OCI-LY7 (cell line): ENCODE measurements at regions of chr10 and their contacts with region 1.

Region 1: DNA sequence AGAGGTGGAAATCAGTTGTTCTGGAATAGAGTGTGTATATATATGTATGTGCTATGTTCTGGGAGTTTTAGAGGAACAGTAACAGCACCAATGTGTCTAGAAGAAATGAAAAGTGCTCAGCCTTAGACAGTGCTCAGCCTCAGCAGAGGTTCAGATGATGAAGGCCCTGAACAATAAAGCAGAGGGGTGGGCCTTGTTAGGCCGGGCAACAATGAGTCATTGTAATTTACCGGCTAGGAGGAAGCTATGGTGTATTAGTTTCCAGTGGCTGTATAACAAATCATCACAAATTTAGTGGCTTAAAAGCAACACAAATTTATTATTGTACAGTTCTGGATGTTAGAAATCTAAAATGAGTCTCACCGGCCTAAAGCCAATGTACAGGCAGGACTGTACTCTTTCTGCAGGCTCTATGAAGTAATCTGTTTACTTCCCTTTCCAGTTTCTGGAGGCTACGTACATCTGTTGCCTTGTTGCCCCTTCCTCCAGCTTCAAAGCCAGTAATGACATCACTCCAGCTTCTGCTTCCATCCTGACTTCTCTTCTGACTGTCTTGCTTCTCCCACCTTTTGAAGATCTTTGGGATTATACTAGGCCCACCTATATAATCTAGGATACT is 84.6 kb downstream of the CH25H start:
- DNase-seq: no peak
- H3K4me3 ChIP-seq: no peak overlapping the region
- H3K27ac ChIP-seq: no peak overlapping the region
- H3K4me1 ChIP-seq: no peaks in the 10 kb centered on the region
- CTCF ChIP-seq: no peak

Region 2: DNA sequence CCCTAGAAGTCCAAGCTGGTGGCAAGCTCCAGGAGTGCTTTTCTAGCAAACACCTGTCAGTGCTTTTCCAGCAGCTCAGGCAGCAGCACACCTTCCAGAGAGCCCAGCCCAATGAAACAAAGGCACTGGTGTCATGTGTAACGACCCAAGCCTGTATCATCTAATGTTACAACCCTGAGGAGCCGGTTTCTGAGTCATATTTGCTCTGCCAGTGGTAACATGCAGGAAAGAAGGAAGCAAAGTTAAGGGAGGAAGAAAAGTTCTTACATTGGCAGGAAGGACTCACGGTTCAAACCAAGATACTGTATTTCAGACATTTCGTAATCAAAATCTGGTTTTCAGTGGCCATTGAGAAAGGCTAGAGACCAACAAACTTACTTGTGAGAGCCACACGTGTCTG is 270.8 kb before region 1 on chr10 and contains the start of gene ANKRD22:
- CTCF ChIA-PET with region 1: no interaction called
- POLR2A ChIA-PET with region 1: no interaction called
- intact Hi-C with region 1: no loop called
- DNase-seq: no peak
- H3K4me3 ChIP-seq: no peak within 1 kb of the TSS
- H3K27ac ChIP-seq: no peak within 1 kb of the TSS
- H3K4me1 ChIP-seq: no peaks in the 10 kb centered on the region
- CTCF ChIP-seq: no peak
- total RNA-seq, gene ANKRD22: not detected in 2 replicates

Region 3: DNA sequence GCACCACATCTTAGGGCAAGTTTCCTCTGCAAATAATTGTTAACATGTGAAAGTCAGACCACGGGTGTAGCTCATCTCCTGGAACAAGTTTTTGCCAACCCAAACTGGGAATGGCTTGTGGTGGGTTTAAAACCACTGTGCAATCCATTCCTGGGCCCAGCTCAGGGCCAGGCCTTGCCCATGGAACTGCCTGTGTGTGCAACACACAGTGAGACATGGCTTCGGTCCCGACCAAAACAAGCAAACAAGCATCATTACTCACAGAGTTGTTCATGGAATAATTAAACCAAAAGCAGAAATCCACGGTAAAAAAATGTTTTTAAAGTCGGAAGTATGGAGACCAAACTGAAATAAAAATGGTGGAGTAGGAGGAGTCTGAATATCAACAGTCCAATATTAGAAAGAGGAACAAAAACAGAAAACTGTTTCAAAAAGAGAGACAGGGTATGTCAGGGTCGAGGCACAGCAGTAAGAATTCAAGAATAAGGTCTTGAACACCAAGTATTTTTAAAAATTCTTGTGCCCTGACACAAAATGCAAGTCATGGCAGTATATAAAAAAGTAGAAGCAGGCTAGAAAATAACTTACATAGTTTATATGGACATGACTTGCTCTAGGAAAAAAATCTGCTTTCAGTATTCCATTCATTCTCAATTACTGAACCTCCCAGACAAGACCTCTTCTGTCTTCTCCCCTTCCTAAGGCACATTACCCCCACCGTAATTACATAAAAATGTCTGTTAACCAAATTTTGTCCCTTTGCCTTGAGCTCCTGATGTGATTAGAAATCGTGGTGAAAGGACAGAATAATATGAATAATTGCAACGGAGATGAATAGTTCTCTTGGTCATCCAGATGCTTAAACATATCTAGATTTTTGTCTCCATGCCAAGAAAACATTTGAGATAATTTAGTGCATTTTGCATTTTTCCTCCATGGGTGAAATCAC is 43.5 kb before region 1 on chr10:
- CTCF ChIA-PET with region 1: no interaction called
- POLR2A ChIA-PET with region 1: no interaction called
- intact Hi-C with region 1: loop called (anchors 5 kb)
- DNase-seq: no peak
- H3K4me3 ChIP-seq: no peak overlapping the region
- H3K27ac ChIP-seq: no peak overlapping the region
- H3K4me1 ChIP-seq: no peaks in the 10 kb centered on the region
- CTCF ChIP-seq: no peak

Region 4: DNA sequence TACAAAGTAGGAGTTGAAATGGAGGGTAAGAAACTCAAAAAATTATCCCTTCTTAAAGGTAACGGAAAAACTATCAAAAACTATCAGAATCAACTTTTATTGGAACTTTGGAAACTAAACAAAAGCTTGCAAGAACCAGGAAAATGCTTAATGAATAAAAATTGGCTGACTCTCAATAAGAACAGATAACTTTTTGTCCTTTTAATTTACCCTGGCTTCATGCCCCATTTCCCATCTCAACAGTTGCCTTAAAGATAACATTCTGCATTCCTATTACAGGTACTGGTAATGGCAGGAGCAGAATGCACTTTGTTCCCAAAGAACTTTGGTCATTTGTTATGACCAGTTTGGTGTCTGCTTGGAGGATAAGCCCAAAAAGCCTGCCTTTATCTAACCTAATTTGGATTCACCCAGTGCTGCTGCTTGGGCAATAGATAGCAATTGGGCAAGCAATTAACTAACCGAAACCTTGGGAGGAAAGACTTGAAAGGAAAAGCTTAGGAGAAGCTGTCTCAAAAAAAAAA is 66.7 kb after region 1 on chr10:
- CTCF ChIA-PET with region 1: no interaction called
- POLR2A ChIA-PET with region 1: no interaction called
- intact Hi-C with region 1: no loop called
- DNase-seq: no peak
- H3K4me3 ChIP-seq: no peak overlapping the region
- H3K27ac ChIP-seq: no peak overlapping the region
- H3K4me1 ChIP-seq: no peaks in the 10 kb centered on the region
- CTCF ChIP-seq: no peak